Panc1 (cell line): ENCODE measurements at regions of chr19 and their contacts with region 1.

Region 1: DNA sequence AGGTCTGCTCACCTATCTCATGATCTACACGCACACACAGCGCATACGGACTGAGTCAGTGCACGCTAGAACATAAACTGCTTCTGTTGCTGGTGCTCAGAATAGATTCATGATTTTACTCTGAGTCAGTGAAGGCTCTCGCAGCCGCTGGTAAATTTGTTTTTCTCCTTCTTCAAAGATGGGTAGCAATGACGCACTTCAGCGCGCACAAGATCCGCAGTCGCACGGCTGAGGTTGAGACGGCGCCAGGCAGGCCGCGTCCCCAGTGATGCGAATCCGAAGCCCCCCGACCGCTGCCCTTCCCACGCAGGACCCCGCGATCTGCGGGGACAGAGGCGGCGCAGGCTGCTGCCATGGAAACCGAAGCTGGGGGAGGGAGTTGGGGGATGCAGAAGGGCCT is 103.7 kb upstream of the USP29 start:
- DNase-seq: no peak
- ATAC-seq: no peak
- H3K4me3 ChIP-seq: no peak overlapping the region
- H3K27ac ChIP-seq: no peak overlapping the region
- H3K4me1 ChIP-seq: no peaks in the 10 kb centered on the region
- H3K27me3 ChIP-seq: no peaks in the 10 kb centered on the region
- CTCF ChIP-seq: no peak

Region 2: DNA sequence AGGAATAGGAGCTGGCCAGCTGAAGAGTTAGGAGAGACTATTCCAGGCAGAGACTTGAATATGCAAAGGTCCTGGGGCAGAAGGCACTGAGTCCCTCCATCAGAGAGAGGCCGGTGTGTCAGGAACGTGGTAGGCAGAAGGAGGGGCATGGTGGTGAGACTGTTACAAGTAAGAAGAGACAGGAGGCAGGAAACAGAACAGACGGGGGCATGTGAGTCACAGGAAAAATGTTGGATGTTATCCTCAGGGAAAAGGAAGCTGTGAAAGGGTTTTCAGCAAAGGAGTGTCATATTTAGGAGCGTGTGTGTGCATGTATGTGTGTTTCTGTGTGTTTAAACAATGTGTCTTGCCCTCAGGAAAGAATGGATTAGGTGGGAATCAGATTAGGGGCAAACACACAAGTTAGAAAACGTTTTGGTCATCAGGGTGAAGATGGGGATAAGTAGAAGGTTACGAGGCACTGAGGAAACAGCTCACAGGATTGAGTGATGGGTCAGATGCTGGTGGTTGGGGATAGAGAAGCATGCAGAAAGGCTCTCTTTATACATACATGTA is 742.4 kb before region 1 on chr19:
- CTCF ChIA-PET with region 1: no interaction called
- POLR2A ChIA-PET with region 1: interaction called, 24 read pairs
- in situ Hi-C with region 1: no loop called
- intact Hi-C with region 1: no loop called
- DNase-seq: no peak
- ATAC-seq: peak; percentile 26; the same call in 1 of the 2 replicates
- H3K4me3 ChIP-seq: no peak overlapping the region
- H3K27ac ChIP-seq: no peak overlapping the region
- H3K4me1 ChIP-seq: no peaks in the 10 kb centered on the region
- H3K27me3 ChIP-seq: no peaks in the 10 kb centered on the region
- CTCF ChIP-seq: no peak

Region 3: GRCh38 chr19:57068921-57069697 is 53.0 kb after region 1 on chr19:
- CTCF ChIA-PET with region 1: no interaction called
- POLR2A ChIA-PET with region 1: interaction called, 17 read pairs
- in situ Hi-C with region 1: no loop called
- intact Hi-C with region 1: no loop called
- DNase-seq: no peak
- ATAC-seq: peak; percentile 70
- H3K4me3 ChIP-seq: no peak overlapping the region
- H3K27ac ChIP-seq: no peak overlapping the region
- H3K4me1 ChIP-seq: no peaks in the 10 kb centered on the region
- H3K27me3 ChIP-seq: no peaks in the 10 kb centered on the region
- CTCF ChIP-seq: peak; percentile 82